CD4-positive, alpha-beta T cell (primary cell): ENCODE measurements at regions of chr11 and their contacts with region 1.

Region 1: DNA sequence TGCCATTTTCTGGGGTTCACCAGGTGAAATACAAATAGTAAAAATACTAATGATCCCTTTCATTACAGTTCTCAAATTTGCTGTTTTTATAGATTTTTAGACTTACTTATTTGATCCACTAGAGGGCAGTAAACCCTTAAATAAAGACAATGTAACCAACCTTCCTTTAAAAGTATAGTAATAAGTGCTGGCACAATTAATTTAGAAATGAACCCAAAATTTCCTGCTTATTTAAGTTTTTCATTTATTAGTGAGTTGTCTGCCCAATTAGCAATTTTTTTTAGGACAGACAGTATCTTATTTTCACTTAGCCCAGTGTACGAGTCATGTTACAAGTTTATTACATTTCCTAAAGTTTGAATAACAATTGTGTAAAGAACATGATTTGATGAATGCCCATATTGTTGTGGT is 4.7 kb downstream of the DDIAS start:
- DNase-seq: peak in 3 of 14 experiments; percentile 45 to 63 (median 52)
- ATAC-seq: no peak
- H3K4me3 ChIP-seq: no peak overlapping the region
- H3K4me3 Mint-ChIP-seq: no peak overlapping the region
- H3K27ac ChIP-seq: no peak overlapping the region
- H3K27ac Mint-ChIP-seq: peak overlapping the region; percentile 2
- H3K4me1 ChIP-seq: peaks cover 9% of the 10 kb centered on the region
- H3K4me1 Mint-ChIP-seq: peaks cover 28% of the 10 kb centered on the region
- H3K27me3 ChIP-seq: no peaks in the 10 kb centered on the region
- H3K27me3 Mint-ChIP-seq: no peaks in the 10 kb centered on the region
- CTCF ChIP-seq: peak; percentile 73

Region 2: DNA sequence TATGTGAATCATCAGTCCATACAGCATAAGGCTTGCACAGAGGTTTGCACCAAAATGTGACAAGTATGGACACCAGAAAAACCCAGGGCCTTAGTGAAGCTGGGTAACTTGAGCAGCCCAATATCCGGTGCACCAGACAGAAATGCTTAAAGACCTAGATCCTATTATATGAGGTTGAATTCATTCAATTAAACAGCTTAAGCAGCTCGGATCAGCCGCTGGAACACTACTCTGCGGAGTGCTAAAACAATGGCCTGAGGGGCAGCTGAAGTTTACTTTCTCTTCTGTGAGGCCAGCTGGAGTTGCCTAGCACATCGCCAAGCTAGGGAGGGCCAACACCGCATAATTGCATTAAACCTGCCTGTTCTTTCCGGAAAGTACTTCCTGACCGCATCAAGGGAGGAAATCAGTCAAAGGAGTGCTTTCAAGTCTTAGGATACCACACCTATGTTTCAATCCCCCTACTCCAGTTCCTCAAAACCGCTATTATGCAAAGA is 155.6 kb before region 1 on chr11:
- CTCF ChIA-PET with region 1: no interaction called
- POLR2A ChIA-PET with region 1: no interaction called
- intact Hi-C with region 1: no loop called
- DNase-seq: peak in 5 of 14 experiments; percentile 13 to 60 (median 43)
- ATAC-seq: peak; percentile 71
- H3K4me3 ChIP-seq: peak overlapping the region; percentile 15
- H3K4me3 Mint-ChIP-seq: peak overlapping the region; percentile 76
- H3K27ac ChIP-seq: no peak overlapping the region
- H3K27ac Mint-ChIP-seq: peak overlapping the region; percentile 40
- H3K4me1 ChIP-seq: peaks cover 15% of the 10 kb centered on the region
- H3K4me1 Mint-ChIP-seq: peaks cover 26% of the 10 kb centered on the region
- H3K27me3 ChIP-seq: no peaks in the 10 kb centered on the region
- H3K27me3 Mint-ChIP-seq: no peaks in the 10 kb centered on the region
- CTCF ChIP-seq: no peak

Region 3: GRCh38 chr11:82790723-82791484 is 115.3 kb before region 1 on chr11:
- CTCF ChIA-PET with region 1: no interaction called
- POLR2A ChIA-PET with region 1: no interaction called
- intact Hi-C with region 1: no loop called
- DNase-seq: no peak
- ATAC-seq: no peak
- H3K4me3 ChIP-seq: no peak overlapping the region
- H3K4me3 Mint-ChIP-seq: no peak overlapping the region
- H3K27ac ChIP-seq: no peak overlapping the region
- H3K27ac Mint-ChIP-seq: no peak overlapping the region
- H3K4me1 ChIP-seq: no peaks in the 10 kb centered on the region
- H3K4me1 Mint-ChIP-seq: no peaks in the 10 kb centered on the region
- H3K27me3 ChIP-seq: no peaks in the 10 kb centered on the region
- H3K27me3 Mint-ChIP-seq: peaks cover 4% of the 10 kb centered on the region
- CTCF ChIP-seq: no peak

Region 4: DNA sequence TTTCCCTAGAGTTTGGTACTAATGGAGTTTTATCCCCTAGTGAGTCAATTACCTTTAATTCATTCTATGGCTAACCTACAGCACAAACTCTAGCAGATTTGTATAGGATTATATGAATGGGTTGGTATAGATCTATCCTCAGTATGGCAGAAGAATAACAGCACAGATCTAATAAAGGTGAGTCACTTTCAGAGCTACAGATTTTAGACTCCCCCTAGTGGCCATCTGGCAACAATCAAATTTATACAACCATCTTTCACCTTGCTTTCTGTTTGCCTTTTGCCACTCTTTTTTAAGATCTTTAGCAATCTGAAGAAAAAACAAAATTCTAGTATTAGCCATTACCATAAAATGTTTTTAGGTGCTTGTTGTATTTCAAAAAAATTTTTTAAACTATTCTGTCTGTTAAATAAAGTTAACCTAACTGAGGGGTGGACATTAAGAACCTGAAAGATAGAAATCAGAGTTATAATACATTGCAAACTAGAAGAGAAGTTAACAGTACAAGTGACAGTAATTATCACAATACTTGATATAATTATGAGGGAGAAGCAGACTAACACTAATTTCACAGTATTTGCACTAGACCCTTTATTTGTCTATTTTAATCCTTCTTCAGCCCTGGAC is 21.1 kb after region 1 on chr11:
- CTCF ChIA-PET with region 1: interaction called, 3 read pairs
- POLR2A ChIA-PET with region 1: interaction called, 6 read pairs
- intact Hi-C with region 1: loop called (anchors 1 to 2 kb)
- DNase-seq: peak in 8 of 14 experiments; percentile 7 to 82 (median 44)
- ATAC-seq: peak; percentile 98
- H3K4me3 ChIP-seq: no peak overlapping the region
- H3K4me3 Mint-ChIP-seq: peak overlapping the region; percentile 1
- H3K27ac ChIP-seq: no peak overlapping the region
- H3K27ac Mint-ChIP-seq: peak overlapping the region; percentile 64
- H3K4me1 ChIP-seq: peaks cover 2% of the 10 kb centered on the region
- H3K4me1 Mint-ChIP-seq: peaks cover 44% of the 10 kb centered on the region
- H3K27me3 ChIP-seq: no peaks in the 10 kb centered on the region
- H3K27me3 Mint-ChIP-seq: no peaks in the 10 kb centered on the region
- CTCF ChIP-seq: peak; percentile 97

Region 5: DNA sequence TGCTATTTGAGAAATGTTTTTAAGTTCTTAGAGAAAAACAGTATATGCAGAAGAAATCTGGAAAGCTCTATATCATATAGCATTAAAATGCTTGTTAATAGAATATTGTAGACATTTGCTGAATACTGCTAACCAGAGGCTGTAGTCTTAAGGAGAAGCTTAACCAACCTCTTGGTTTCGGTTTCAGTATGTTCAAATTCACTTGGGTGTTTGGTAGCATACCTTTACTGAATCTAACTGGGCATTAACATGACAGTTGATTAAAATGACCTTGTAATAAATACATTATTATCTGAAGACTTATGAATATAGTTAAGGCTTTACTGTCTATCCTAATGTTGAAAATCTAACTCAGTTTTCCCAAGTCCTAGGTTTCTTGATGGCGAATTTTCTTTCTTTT is 256.1 kb after region 1 on chr11:
- CTCF ChIA-PET with region 1: interaction called, 5 read pairs
- POLR2A ChIA-PET with region 1: interaction called, 208 read pairs
- intact Hi-C with region 1: loop called (anchors 1 to 2 kb)
- DNase-seq: peak in 3 of 14 experiments; percentile 60 to 67 (median 64)
- ATAC-seq: peak; percentile 39
- H3K4me3 ChIP-seq: no peak overlapping the region
- H3K4me3 Mint-ChIP-seq: peak overlapping the region; percentile 75
- H3K27ac ChIP-seq: peak overlapping the region; percentile 2 to 45
- H3K27ac Mint-ChIP-seq: peak overlapping the region; percentile 100
- H3K4me1 ChIP-seq: peaks cover 19% of the 10 kb centered on the region
- H3K4me1 Mint-ChIP-seq: peaks cover 77% of the 10 kb centered on the region
- H3K27me3 ChIP-seq: no peaks in the 10 kb centered on the region
- H3K27me3 Mint-ChIP-seq: no peaks in the 10 kb centered on the region
- CTCF ChIP-seq: no peak

Region 6: DNA sequence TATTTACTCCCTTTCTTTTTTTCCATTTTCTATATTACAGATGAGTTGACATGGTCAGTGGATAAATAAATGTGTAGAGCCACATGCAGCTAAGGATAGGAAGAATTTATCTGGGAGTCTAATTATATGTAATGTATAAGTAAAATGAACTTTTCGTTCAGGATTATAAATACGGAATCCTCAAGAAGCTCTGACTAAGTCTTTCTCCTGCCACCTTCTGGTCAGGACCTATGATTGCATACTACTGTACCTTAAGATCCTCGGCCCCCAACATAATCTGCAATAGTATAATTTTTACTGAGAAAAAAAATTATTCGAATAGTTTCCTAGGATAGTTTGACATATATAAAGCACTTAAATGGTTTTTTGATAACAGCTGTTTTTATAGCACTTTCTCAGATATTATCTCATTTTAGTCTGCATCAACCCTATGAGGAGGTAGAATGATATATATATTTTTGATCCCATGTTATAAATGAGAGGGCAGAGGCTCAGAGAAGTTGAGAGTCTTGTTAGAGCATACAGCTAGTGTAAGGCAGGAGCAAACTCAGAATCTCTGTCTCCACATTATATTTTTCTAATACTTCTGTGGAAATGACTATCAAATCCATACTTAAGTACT is 343.8 kb after region 1 on chr11:
- CTCF ChIA-PET with region 1: interaction called, 9 read pairs
- POLR2A ChIA-PET with region 1: interaction called, 11 read pairs
- intact Hi-C with region 1: loop called (anchors 1 kb)
- DNase-seq: peak in 4 of 14 experiments; percentile 21 to 70 (median 62)
- ATAC-seq: peak; percentile 85
- H3K4me3 ChIP-seq: no peak overlapping the region
- H3K4me3 Mint-ChIP-seq: no peak overlapping the region
- H3K27ac ChIP-seq: no peak overlapping the region
- H3K27ac Mint-ChIP-seq: no peak overlapping the region
- H3K4me1 ChIP-seq: no peaks in the 10 kb centered on the region
- H3K4me1 Mint-ChIP-seq: no peaks in the 10 kb centered on the region
- H3K27me3 ChIP-seq: no peaks in the 10 kb centered on the region
- H3K27me3 Mint-ChIP-seq: no peaks in the 10 kb centered on the region
- CTCF ChIP-seq: peak; percentile 85

Region 7: DNA sequence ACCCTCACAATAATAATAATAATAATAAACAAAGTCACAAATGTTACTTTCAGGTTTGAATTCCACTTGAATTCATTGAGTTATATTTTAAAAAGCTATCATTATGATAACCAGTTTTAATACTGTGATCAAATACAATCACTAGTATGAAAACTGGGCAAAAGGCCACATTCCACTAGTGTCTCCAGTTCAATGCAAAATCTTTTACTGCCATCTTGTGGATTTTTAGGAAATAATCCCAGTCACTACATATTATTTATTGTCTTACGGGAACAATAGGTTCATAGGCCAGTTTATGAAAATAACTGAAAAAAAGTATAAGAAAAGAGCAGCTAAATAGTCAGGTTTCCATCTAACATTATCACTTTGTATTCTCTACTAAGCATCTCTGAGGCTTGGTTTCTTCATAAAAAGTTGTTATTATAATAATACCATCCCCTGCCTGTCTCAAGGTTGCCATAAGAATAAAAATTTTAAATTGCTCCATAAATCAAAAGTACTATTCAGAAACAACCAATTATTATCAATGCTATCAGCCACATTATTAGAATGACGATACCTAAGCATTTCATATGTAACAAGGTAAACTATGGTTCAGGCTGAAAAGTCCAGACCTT is 913.8 kb after region 1 on chr11:
- CTCF ChIA-PET with region 1: no interaction called
- POLR2A ChIA-PET with region 1: no interaction called
- intact Hi-C with region 1: loop called in 1 of 2 experiments (anchors 1 kb)
- DNase-seq: peak in 3 of 14 experiments; percentile 22 to 33 (median 32)
- ATAC-seq: no peak
- H3K4me3 ChIP-seq: no peak overlapping the region
- H3K4me3 Mint-ChIP-seq: no peak overlapping the region
- H3K27ac ChIP-seq: no peak overlapping the region
- H3K27ac Mint-ChIP-seq: no peak overlapping the region
- H3K4me1 ChIP-seq: no peaks in the 10 kb centered on the region
- H3K4me1 Mint-ChIP-seq: no peaks in the 10 kb centered on the region
- H3K27me3 ChIP-seq: no peaks in the 10 kb centered on the region
- H3K27me3 Mint-ChIP-seq: no peaks in the 10 kb centered on the region
- CTCF ChIP-seq: peak; percentile 32